Activated CD4-positive, alpha-beta T cell treated with anti-CD3 and anti-CD28 coated beads, Interleukin-2, amount 10 ng/mL, durations not matched to agents 7 days and 5 days (primary cell): ENCODE measurements at regions of chr9 and their contacts with region 1.

Region 1: GRCh38 chr9:137240861-137241489 is at the start of gene TUBB4B:
- DNase-seq: peak; percentile 98
- H3K4me3 Mint-ChIP-seq: peak within 1 kb of the TSS; percentile 88
- H3K27ac Mint-ChIP-seq: peak within 1 kb of the TSS; percentile 92
- H3K4me1 Mint-ChIP-seq: peaks cover 33% of the 10 kb centered on the region
- H3K27me3 Mint-ChIP-seq: no peaks in the 10 kb centered on the region
- total RNA-seq, gene TUBB4B: 355 to 382 TPM

Region 2: DNA sequence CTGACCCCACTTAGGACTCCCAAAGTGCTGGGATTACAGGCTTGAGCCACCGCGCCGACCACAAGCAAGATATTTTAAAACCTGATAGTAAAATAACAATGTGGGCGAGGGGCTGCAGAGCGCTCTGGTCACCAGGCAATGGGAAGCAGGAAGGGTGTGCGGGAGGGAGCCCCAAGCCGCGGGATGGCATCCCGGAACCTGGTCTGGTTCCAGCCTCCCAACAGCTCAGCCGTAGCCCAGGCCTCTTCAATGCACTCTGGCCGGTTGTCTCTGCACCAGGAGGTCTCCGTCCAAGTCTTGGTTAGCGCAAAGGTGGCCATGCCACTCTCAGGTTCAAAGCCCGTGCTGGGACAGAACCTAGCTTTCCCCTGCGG is 164.4 kb before region 1 on chr9:
- CTCF ChIA-PET with region 1: no interaction called
- POLR2A ChIA-PET with region 1: no interaction called
- DNase-seq: no peak
- H3K4me3 Mint-ChIP-seq: peak overlapping the region; percentile 66
- H3K27ac Mint-ChIP-seq: no peak overlapping the region
- H3K4me1 Mint-ChIP-seq: peaks cover 10% of the 10 kb centered on the region
- H3K27me3 Mint-ChIP-seq: no peaks in the 10 kb centered on the region

Region 3: DNA sequence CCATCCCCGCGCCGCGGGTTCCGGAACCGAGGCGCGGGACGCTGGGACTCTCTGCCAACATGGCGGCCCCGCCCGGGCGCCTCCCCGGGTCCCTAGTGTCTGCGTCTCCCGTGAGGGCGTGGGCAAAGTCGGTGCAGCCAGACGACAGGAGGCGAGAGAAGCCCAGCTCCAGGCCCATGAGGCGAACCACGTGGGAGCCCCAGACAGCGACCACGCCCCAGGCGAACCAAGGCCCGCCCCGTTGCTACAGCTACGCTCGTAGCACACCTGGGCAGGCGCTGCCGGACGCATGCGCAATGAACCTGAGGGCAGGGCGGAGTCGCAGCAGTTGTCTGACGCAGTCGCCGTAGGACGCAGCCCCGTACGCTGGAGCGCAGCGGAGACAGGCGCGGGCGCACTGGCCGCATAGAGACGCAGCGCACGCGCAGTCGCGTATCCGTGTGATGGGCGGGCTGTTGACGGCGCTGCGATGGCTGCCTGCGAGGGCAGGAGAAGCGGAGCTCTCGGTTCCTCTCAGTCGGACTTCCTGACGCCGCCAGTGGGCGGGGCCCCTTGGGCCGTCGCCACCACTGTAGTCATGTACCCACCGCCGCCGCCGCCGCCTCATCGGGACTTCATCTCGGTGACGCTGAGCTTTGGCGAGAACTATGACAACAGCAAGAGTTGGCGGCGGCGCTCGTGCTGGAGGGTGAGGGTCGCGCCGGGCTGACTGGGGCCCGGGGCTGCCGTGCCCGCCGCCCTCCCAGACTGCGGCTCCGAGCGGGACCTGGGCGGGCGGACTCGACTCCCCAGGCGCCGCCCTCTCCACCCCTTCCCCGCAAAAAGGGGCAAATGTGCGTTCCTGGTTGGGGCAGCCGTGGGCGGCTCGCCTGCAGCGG is 154.2 kb before region 1 on chr9 and contains the start of gene MAN1B1:
- CTCF ChIA-PET with region 1: interaction called, 4 read pairs
- POLR2A ChIA-PET with region 1: interaction called, 11 read pairs
- DNase-seq: peak; percentile 100
- H3K4me3 Mint-ChIP-seq: peak within 1 kb of the TSS; percentile 85
- H3K27ac Mint-ChIP-seq: peak within 1 kb of the TSS; percentile 97
- H3K4me1 Mint-ChIP-seq: peaks cover 44% of the 10 kb centered on the region
- H3K27me3 Mint-ChIP-seq: no peaks in the 10 kb centered on the region
- total RNA-seq, gene MAN1B1: 43.0 to 55.0 TPM

Region 4: DNA sequence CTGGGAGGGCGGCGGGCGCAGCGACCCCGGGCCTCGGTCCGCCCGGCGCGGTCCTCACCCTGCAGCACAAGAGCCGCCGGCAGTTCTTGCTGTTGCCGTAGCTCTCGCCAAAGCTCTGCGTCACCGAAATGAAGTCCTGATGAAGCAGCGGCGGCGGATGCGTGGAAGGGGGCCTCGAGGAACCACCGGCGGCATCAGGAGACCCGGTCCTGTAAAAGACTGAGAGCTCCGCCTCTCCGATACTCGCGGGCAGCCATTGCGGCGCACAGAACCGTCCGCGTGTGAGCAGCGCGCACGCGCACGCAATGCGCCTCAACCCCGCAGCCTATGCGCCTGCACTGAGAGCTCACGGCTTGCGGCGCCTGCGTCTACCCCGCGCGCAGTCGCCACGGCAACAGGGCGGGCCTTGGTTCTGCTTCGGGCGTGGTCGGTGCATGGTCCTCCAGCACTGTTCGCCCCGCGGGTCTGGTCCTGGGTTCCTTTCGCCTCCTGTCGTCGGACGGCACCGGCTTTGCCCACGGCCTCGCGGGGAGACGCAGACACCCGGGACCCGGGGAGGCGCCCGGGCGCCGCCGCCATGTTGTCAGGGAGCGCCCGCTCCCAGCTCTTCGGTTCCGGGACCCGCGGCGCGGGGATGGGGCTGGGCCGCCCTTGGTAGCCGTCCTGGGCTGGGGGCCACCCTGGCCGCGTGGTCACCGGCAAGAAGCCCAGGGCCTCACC is 111.4 kb before region 1 on chr9:
- CTCF ChIA-PET with region 1: interaction called, 15 read pairs
- POLR2A ChIA-PET with region 1: interaction called, 5 read pairs
- DNase-seq: peak; percentile 91
- H3K4me3 Mint-ChIP-seq: peak overlapping the region; percentile 77
- H3K27ac Mint-ChIP-seq: peak overlapping the region; percentile 87
- H3K4me1 Mint-ChIP-seq: peaks cover 30% of the 10 kb centered on the region
- H3K27me3 Mint-ChIP-seq: peaks cover 5% of the 10 kb centered on the region

Region 5: GRCh38 chr9:137188490-137189296 is 52.3 kb before region 1 on chr9 and contains the starts of genes ANAPC2 and SSNA1:
- CTCF ChIA-PET with region 1: interaction called, 11 read pairs
- POLR2A ChIA-PET with region 1: no interaction called
- DNase-seq: peak; percentile 92
- H3K4me3 Mint-ChIP-seq: peak within 1 kb of the TSS; percentile 96
- H3K27ac Mint-ChIP-seq: peak within 1 kb of the TSS; percentile 95
- H3K4me1 Mint-ChIP-seq: peaks cover 34% of the 10 kb centered on the region
- H3K27me3 Mint-ChIP-seq: no peaks in the 10 kb centered on the region
- total RNA-seq, gene ANAPC2: 61.3 to 76.1 TPM
- total RNA-seq, gene SSNA1: 74.8 to 81.3 TPM

Region 6: GRCh38 chr9:137223078-137223970 is 17.7 kb before region 1 on chr9:
- CTCF ChIA-PET with region 1: interaction called, 65 read pairs
- POLR2A ChIA-PET with region 1: interaction called, 3 read pairs
- DNase-seq: peak; percentile 99
- H3K4me3 Mint-ChIP-seq: peak overlapping the region; percentile 73
- H3K27ac Mint-ChIP-seq: peak overlapping the region; percentile 84
- H3K4me1 Mint-ChIP-seq: peaks cover 21% of the 10 kb centered on the region
- H3K27me3 Mint-ChIP-seq: peaks cover 2% of the 10 kb centered on the region

Region 7: DNA sequence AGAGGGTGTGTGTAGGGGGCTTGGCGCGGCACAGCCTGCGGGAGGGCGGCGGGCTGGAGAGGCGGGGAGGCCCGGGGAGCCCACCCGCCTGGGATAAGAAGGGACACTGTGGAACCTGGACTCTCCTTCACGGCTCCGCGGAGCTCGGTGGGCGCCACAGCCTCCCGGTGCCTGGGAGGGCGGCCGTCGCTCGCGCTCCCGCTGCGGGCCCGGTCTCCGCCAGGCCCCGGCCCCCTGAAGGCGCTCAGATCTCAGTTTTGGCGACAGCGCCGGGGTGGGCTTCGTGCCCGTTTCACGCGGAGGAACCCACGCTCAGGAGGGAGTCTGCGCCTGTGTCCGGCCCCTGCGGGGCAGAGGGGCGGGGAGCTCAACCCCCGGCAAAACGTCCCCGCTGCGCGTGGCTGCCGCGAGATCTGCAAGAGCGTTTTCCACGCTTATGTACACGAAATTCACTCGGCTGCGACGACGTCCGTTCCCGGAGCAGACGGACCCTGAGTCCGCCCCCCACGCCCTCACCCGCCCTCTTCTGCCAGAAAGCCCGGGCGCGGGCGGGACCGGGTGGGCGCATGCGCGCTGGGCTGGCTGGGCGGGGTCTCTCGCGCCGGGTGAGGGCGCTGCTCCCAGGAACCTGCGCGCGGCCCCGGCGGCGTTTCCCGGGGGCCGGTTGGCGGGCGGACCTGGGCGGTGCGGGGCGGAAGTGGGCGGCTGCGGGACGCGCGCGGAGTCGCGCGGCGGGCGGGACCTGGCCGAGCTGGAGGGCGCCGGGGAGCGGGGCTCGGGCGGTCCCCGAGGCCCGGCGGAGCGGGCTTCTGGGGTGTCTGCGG is 13.9 kb after region 1 on chr9 and contains the start of gene NELFB:
- CTCF ChIA-PET with region 1: interaction called, 20 read pairs
- POLR2A ChIA-PET with region 1: interaction called, 6 read pairs
- DNase-seq: peak; percentile 93
- H3K4me3 Mint-ChIP-seq: peak within 1 kb of the TSS; percentile 90
- H3K27ac Mint-ChIP-seq: peak within 1 kb of the TSS; percentile 87
- H3K4me1 Mint-ChIP-seq: peaks cover 18% of the 10 kb centered on the region
- H3K27me3 Mint-ChIP-seq: no peaks in the 10 kb centered on the region
- total RNA-seq, gene NELFB: 54.1 to 66.6 TPM